ENCODE measurements at regions of chr1 and their contacts with region 1.

Region 1: DNA sequence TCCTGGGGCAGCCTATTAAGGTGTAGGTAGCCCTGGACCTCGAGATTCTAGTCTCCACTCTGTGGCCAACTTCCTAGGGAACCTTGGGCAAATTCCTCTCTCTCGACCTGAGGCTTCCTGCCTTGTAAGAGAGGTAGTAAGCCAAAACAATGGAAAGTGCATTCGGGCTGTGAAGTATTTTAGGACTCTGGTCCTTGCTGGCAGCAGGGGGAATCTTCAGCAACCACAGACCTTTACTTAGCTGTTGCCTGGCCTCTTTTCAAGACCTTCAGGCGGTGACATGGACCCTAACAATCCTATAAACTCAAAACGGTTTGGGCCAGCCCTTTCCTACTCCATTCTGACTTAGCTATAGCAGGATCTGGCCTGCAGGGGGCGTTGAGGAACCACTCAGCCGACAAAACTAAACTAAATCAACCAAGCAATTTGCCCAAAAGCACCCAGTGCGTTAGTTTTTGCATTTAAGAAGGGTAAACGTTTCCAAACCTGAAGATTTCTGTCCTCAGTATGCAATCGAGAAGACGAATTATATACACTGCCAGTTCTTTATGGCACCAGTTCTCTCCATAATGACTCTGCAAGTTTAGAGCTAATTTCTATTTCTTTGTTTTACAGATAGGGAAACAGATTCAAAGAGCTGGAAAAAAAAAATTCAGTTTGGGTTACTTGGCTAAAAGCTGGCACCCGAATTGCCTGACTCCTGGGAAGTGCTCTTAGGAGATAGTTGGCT is 10.9 kb upstream of the SESN2 start:
- DNase-seq: peak; percentile 70 to 91 (median 78)
- ATAC-seq: peak; percentile 23
- H3K4me3 ChIP-seq: peak overlapping the region; percentile 78
- H3K4me3 Mint-ChIP-seq: peak overlapping the region; percentile 87
- H3K27ac ChIP-seq: peak overlapping the region; percentile 80 to 99
- H3K27ac Mint-ChIP-seq: peak overlapping the region; percentile 86
- H3K4me1 ChIP-seq: peaks cover 54% of the 10 kb centered on the region
- H3K4me1 Mint-ChIP-seq: peaks cover 49% of the 10 kb centered on the region
- H3K27me3 ChIP-seq: no peaks in the 10 kb centered on the region
- H3K27me3 Mint-ChIP-seq: no peaks in the 10 kb centered on the region
- CTCF ChIP-seq: peak; percentile 92

Region 2: GRCh38 chr1:28259307-28260167 is 11.1 kb after region 1 on chr1 and contains the start of gene SESN2:
- CTCF ChIA-PET with region 1: interaction called, 47 read pairs
- POLR2A ChIA-PET with region 1: interaction called, 92 read pairs
- intact Hi-C with region 1: loop called (anchors 1 kb)
- DNase-seq: peak; percentile 98 to 99 (median 99)
- ATAC-seq: peak; percentile 98
- H3K4me3 ChIP-seq: peak within 1 kb of the TSS; percentile 98
- H3K4me3 Mint-ChIP-seq: peak within 1 kb of the TSS; percentile 91
- H3K27ac ChIP-seq: peak within 1 kb of the TSS; percentile 29 to 54
- H3K27ac Mint-ChIP-seq: peak within 1 kb of the TSS; percentile 76
- H3K4me1 ChIP-seq: peaks cover 72% of the 10 kb centered on the region
- H3K4me1 Mint-ChIP-seq: peaks cover 46% of the 10 kb centered on the region
- H3K27me3 ChIP-seq: no peaks in the 10 kb centered on the region
- H3K27me3 Mint-ChIP-seq: no peaks in the 10 kb centered on the region
- CTCF ChIP-seq: no peak
- total RNA-seq, gene SESN2: 8.8 to 9.6 TPM

Region 3: DNA sequence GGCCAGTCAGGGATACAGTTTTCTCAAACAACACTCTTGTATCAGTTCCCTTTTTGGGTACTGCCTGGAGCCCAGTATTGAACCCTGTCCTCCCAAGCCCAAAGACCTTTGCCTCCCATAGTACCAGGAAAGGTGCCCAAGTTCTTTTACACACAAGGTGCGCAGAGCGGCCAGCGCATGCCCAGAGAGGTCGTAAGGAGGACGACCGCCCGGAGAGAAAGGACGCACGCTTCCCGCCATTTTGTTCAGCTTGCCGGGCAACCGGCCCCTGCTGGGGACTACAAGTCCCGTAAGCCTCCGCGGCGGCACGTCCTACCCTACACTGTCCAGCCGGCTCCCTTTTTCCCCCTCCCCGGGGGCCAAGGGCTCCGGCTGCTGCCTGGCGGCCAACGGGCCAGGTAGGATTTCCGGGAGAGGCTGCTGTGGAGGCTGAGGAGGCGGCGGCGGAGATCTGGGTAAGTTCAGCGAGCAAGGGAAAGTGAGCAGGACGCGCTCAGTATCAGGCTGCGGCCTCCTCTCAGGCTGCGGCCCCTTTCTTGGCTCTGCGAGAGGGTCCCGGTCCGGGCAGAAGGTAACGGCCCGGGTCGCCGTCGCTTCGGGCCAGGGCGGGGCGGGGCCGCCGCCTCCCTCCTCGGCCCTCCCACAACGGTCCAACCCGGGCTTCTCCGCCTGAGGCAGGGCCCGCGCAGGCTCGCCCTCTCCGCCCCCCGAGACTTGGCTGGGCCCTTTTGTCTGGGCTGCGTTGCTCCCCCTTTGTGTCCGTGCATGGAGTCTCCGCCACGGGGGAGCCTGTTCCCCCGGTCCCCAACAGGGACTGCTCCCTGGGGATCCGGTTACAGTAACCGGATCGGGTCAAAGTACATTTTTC is 121.2 kb after region 1 on chr1 and contains the start of gene PHACTR4:
- CTCF ChIA-PET with region 1: interaction called, 16 read pairs
- POLR2A ChIA-PET with region 1: no interaction called
- intact Hi-C with region 1: loop called in 1 of 2 experiments (anchors 5 kb)
- DNase-seq: peak; percentile 53 to 90 (median 68)
- ATAC-seq: peak; percentile 88
- H3K4me3 ChIP-seq: peak within 1 kb of the TSS; percentile 97
- H3K4me3 Mint-ChIP-seq: peak within 1 kb of the TSS; percentile 94
- H3K27ac ChIP-seq: peak within 1 kb of the TSS; percentile 69 to 81
- H3K27ac Mint-ChIP-seq: peak within 1 kb of the TSS; percentile 84
- H3K4me1 ChIP-seq: peaks cover 25% of the 10 kb centered on the region
- H3K4me1 Mint-ChIP-seq: peaks cover 35% of the 10 kb centered on the region
- H3K27me3 ChIP-seq: no peaks in the 10 kb centered on the region
- H3K27me3 Mint-ChIP-seq: no peaks in the 10 kb centered on the region
- CTCF ChIP-seq: no peak
- total RNA-seq, gene PHACTR4: 26.0 to 26.3 TPM

Region 4: DNA sequence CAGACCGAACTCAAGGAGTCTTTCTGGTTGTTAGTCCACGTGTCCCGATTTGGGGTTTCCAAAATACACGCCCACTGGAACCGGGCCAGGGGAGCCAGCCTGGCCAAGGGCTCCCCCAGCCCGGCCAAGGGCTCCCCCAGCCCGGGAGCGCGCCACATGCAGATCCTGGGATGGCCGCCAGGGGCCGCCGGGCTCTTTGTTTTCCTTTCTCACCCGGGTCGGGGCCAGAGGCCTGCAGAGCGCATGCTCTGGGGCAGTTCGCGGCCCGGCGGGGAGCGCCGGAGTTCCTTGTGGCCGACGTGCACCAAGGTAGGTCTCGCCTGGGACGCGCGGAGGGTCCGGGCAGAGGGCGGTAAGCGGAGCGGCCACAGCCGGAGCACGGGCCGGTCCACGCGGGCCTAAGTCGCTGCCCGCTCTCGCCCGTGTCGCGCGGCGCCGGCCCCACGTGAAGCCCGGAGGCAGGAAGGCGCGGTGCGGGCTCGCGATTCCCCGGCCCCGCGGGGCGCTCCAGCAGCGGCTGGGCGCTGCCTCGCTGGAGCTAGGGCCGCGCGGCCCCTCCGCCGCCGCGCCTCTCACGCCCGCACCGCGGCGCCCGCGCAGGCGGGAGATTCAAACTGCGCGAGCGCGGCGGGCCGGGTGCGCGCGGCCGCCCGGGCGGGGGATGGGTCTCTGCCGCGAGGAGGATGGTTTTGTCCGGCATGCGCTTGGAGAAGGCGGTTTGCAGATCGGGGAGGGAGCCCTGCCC is 269.7 kb after region 1 on chr1:
- CTCF ChIA-PET with region 1: no interaction called
- POLR2A ChIA-PET with region 1: interaction called, 3 read pairs
- intact Hi-C with region 1: loop called in 1 of 2 experiments (anchors 5 kb)
- DNase-seq: peak; percentile 80 to 93 (median 86)
- ATAC-seq: peak; percentile 90
- H3K4me3 ChIP-seq: peak overlapping the region; percentile 66
- H3K4me3 Mint-ChIP-seq: peak overlapping the region; percentile 91
- H3K27ac ChIP-seq: peak overlapping the region; percentile 23 to 29
- H3K27ac Mint-ChIP-seq: peak overlapping the region; percentile 83
- H3K4me1 ChIP-seq: peaks cover 24% of the 10 kb centered on the region
- H3K4me1 Mint-ChIP-seq: peaks cover 33% of the 10 kb centered on the region
- H3K27me3 ChIP-seq: no peaks in the 10 kb centered on the region
- H3K27me3 Mint-ChIP-seq: no peaks in the 10 kb centered on the region
- CTCF ChIP-seq: peak; percentile 94

Region 5: GRCh38 chr1:28602536-28603439 is 354.3 kb after region 1 on chr1:
- CTCF ChIA-PET with region 1: interaction called, 3 read pairs
- POLR2A ChIA-PET with region 1: interaction called, 3 read pairs
- intact Hi-C with region 1: loop called in 1 of 2 experiments (anchors 5 kb)
- DNase-seq: peak in 6 of 14 experiments; percentile 11 to 65 (median 48)
- ATAC-seq: no peak
- H3K4me3 ChIP-seq: no peak overlapping the region
- H3K4me3 Mint-ChIP-seq: no peak overlapping the region
- H3K27ac ChIP-seq: no peak overlapping the region
- H3K27ac Mint-ChIP-seq: no peak overlapping the region
- H3K4me1 ChIP-seq: peaks cover 3% of the 10 kb centered on the region
- H3K4me1 Mint-ChIP-seq: no peaks in the 10 kb centered on the region
- H3K27me3 ChIP-seq: no peaks in the 10 kb centered on the region
- H3K27me3 Mint-ChIP-seq: no peaks in the 10 kb centered on the region
- CTCF ChIP-seq: peak; percentile 67

Region 6: GRCh38 chr1:28835237-28835650 is 586.8 kb after region 1 on chr1:
- CTCF ChIA-PET with region 1: no interaction called
- POLR2A ChIA-PET with region 1: no interaction called
- intact Hi-C with region 1: no loop called
- DNase-seq: no peak
- ATAC-seq: no peak
- H3K4me3 ChIP-seq: no peak overlapping the region
- H3K4me3 Mint-ChIP-seq: no peak overlapping the region
- H3K27ac ChIP-seq: no peak overlapping the region
- H3K27ac Mint-ChIP-seq: no peak overlapping the region
- H3K4me1 ChIP-seq: no peaks in the 10 kb centered on the region
- H3K4me1 Mint-ChIP-seq: no peaks in the 10 kb centered on the region
- H3K27me3 ChIP-seq: no peaks in the 10 kb centered on the region
- H3K27me3 Mint-ChIP-seq: no peaks in the 10 kb centered on the region
- CTCF ChIP-seq: no peak

Region 7: DNA sequence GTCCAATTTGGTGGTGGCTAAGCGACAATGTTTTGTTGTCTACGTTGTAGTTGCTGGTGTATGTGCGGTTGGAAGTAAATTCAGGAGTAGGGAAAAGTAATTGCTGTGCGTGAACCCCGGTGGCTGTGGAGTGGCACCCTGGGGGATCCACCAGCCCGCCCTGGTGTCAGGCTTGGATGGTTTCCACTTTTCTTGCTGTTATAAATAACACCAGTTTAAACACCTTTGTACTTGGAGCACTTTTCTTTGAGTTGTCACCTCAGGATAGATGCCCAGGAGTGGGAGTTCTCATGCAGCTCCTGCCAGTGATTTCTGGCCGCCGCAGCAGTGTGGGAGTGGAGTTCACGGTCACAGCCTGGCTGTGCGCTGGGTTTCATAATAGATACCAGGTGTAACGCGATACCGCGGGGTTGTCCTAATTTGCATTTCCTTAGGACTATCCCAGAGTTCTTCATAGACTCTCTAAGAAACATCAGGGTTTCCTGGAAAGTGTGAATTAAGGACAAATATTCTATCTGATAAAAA is 888.0 kb after region 1 on chr1:
- CTCF ChIA-PET with region 1: no interaction called
- POLR2A ChIA-PET with region 1: no interaction called
- intact Hi-C with region 1: no loop called
- DNase-seq: no peak
- ATAC-seq: no peak
- H3K4me3 ChIP-seq: no peak overlapping the region
- H3K4me3 Mint-ChIP-seq: no peak overlapping the region
- H3K27ac ChIP-seq: no peak overlapping the region
- H3K27ac Mint-ChIP-seq: no peak overlapping the region
- H3K4me1 ChIP-seq: no peaks in the 10 kb centered on the region
- H3K4me1 Mint-ChIP-seq: no peaks in the 10 kb centered on the region
- H3K27me3 ChIP-seq: no peaks in the 10 kb centered on the region
- H3K27me3 Mint-ChIP-seq: peaks cover 15% of the 10 kb centered on the region
- CTCF ChIP-seq: no peak